Mammary epithelial cell (primary cell): ENCODE measurements at regions of chr15 and their contacts with region 1.

Region 1: DNA sequence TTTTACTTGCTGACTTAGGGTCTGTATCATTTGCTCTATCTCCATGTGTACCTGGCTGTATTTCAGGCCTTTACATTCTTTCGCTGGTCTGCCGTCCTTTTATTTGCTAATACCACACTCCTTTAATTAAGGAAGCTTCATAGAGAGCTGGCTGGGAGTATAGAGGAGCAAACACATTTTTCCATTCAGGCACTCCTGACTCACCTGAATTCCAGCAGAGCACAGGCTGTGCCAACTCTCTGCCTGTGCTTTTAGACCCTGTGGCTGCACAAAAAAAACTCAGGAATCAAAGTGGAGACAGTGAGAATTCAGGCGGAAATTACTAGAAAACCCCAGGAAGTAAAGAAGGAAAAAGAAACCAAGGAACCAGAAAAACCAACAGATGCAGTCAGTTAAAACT is 29.0 kb upstream of the ATP10A start:
- DNase-seq: no peak
- H3K4me3 ChIP-seq: no peak overlapping the region
- H3K27ac ChIP-seq: no peak overlapping the region
- H3K4me1 ChIP-seq: no peaks in the 10 kb centered on the region
- H3K27me3 ChIP-seq: no peaks in the 10 kb centered on the region
- CTCF ChIP-seq: no peak

Region 2: DNA sequence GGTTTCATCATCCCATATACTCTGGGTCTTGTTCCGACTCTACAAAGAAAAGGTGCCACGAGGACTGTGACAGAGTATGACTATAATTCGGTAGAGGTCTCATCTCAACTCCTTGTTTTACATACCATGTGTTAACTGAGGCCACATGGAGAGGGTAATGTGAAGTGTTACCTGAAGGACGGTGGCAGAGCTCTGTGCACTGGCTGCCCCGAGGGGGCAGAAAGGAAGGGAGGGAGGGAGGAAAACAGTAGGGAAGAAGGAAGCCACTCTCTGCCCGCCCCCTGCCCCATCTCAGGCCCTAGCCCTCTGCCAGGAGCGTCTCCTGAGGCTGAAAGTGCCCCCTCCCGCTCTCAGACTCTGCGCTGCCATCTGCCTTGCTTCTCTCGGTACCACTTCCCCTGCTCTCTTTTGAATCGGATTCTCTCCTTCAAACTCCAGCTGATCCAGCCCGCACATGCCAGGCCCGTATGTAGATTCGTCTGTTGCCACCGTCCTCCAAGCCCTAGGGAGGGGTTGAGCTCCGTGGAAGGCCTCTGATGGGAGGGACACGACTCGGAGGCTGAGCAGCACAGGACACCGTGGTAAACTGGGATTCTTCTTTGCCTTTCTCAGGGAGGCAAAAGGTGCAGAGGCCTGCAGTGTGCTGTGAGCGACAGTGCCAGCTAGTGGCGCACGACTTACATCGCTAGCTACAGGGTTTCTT is 41.5 kb after region 1 on chr15:
- CTCF ChIA-PET with region 1: no interaction called
- dilution Hi-C with region 1: loop called (anchors 5 kb)
- in situ Hi-C with region 1: no loop called
- intact Hi-C with region 1: no loop called
- DNase-seq: no peak
- H3K4me3 ChIP-seq: no peak overlapping the region
- H3K27ac ChIP-seq: no peak overlapping the region
- H3K4me1 ChIP-seq: no peaks in the 10 kb centered on the region
- H3K27me3 ChIP-seq: no peaks in the 10 kb centered on the region
- CTCF ChIP-seq: no peak